ENCODE measurements at regions of chr10 and their contacts with region 1.

Region 1: DNA sequence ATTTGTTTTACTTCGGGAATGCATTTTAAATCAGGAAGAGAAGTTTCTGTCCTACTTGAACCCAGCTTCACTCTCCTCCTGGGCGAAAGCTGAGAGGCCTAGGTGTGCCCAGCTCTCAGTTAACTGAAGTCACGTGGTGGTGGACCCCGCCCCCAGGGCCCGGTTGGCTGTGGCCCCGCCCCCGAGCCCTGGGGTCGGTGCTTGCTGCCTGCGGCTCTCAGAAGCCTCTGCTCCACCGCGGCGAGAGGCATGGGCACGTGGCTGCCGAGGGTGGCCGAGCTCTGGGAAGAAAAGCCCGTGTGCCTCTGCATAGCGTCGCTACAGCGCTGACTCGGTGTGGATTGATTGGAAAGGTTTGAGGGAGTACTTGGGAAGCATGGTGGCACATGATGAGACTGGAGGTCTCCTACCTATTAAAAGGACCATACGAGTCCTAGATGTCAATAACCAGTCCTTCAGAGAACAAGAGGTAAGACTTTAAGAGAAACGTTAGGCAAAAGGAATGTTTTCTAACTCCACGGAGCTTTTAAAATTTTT is 34.1 kb downstream of the NET1 start:
- DNase-seq: peak; percentile 95 to 97 (median 97)
- ATAC-seq: peak; percentile 89 to 95 (median 94)
- H3K4me3 ChIP-seq: peak overlapping the region; percentile 57 to 64 (median 61)
- H3K27ac ChIP-seq: peak overlapping the region; percentile 68 to 82 (median 82)
- H3K4me1 ChIP-seq: peaks cover 0 to 15% (median 5%) of the 10 kb centered on the region in 4 donors
- H3K27me3 ChIP-seq: no peaks in the 10 kb centered on the region
- CTCF ChIP-seq: no peak
- POLR2A ChIP-seq: peak; percentile 98

Region 2: DNA sequence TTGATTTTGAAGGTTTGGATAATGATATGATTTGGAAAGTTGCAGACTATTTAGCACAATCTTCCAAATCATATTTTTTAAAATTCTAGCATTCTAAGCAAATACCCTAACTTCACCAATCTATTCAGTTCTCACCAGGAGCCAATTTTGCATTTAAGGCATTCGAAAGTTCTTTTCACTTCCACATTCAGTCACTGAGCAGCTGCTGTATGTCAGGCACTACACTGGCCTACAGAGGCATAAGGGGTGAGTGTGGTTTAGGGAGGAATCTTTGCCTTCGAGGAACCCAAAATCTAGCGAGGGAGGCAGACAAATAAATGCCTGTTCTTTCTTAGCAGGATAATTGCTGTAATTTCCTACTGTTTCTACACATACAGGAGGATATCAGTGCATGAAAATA is 92.4 kb before region 1 on chr10:
- intact Hi-C with region 1: no loop called
- DNase-seq: no peak
- ATAC-seq: no peak
- H3K4me3 ChIP-seq: no peak overlapping the region
- H3K27ac ChIP-seq: no peak overlapping the region
- H3K4me1 ChIP-seq: no peaks in the 10 kb centered on the region
- H3K27me3 ChIP-seq: no peaks in the 10 kb centered on the region
- CTCF ChIP-seq: no peak
- POLR2A ChIP-seq: no peak

Region 3: DNA sequence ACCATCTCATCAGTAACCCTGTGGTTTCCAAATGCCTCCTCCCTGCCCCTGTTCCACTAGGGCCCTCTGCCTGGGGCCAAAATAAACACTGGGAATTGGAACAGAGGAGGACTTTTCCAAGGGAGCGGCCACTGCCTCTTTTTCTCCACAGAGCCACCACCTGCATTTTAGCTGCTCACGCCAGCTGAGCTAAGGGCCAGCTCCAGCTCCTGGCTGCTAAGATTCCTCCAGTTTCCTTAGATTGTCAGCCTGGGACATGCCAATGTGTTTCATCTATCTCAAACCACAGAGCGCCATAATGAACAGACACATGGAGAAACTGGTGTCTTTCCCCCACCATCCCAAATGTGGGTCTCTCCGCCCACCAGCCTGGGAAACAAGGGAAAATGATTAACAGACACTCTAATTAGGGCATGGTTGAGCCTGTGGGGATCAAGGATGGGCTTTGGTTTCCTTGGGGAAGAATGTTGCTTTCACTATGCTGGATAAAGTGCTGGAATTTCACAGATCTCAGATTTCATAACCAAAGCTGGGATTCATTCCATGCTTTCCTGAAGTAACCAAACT is 167.8 kb after region 1 on chr10:
- intact Hi-C with region 1: loop called in 1 of 2 experiments (anchors 10 kb)
- DNase-seq: no peak
- ATAC-seq: peak; percentile 64 to 84 (median 82)
- H3K4me3 ChIP-seq: no peak overlapping the region
- H3K27ac ChIP-seq: peak overlapping the region in 2 of 3 donors; percentile 52 to 64
- H3K4me1 ChIP-seq: peaks cover 0 to 26% (median 7%) of the 10 kb centered on the region in 4 donors
- H3K27me3 ChIP-seq: no peaks in the 10 kb centered on the region
- CTCF ChIP-seq: no peak
- POLR2A ChIP-seq: no peak

Region 4: GRCh38 chr10:5623081-5623748 is 176.8 kb after region 1 on chr10:
- intact Hi-C with region 1: loop called (anchors 5 to 10 kb)
- DNase-seq: peak; percentile 93 to 96 (median 95)
- ATAC-seq: peak; percentile 82 to 90 (median 84)
- H3K4me3 ChIP-seq: no peak overlapping the region
- H3K27ac ChIP-seq: no peak overlapping the region
- H3K4me1 ChIP-seq: peaks cover 0 to 28% (median 13%) of the 10 kb centered on the region in 4 donors
- H3K27me3 ChIP-seq: no peaks in the 10 kb centered on the region
- CTCF ChIP-seq: peak; percentile 87 to 97 (median 95)
- POLR2A ChIP-seq: no peak

Region 5: DNA sequence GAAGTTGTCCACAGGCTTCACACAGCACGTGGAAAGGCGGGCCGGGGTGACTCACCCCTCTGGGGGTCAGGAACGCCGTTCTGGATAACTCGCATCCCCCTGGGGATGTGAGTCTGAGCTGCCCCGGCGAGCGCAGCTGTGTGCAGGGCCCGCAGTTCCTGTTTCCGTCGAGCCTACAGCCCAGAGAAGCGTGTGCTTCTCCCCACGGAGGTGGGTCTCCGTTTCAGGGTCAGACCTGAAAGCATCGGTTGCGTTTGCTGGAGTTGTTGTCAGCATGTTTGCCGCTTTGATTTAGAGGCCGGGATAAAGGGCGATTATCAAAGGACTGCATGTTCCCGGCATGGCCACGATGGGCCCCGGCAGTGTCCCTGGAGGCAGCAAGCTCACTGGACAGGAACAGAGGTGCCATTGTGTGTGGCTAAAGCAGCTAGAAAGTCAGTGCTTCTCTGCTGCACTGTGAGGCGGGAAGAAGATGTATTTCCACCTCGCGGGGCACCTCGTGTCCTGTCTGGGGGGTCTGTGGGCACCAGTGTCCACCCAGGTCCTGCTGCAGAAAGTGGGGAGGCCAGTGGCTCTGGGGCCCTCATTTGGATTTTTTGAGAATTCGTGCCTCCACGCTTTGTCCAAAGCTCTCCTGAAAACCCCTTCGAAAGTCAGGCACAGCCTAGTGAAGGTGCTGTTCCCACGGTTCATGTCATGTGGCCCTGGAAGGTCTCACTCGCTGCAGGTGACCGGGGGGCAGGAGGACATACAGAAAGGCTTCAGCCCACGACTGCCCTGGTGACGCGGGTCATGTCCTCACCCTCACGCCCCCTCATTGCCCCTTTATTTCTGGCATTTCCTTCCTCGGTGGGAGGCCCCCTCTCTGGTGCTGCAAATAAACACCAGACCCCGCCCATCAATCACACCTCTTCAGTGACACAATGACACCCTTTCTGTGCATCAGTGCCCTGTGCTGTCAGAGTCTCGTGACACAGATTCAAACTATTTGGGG is 394.2 kb after region 1 on chr10:
- intact Hi-C with region 1: no loop called
- DNase-seq: no peak
- ATAC-seq: peak; percentile 21 to 37 (median 36)
- H3K4me3 ChIP-seq: no peak overlapping the region
- H3K27ac ChIP-seq: no peak overlapping the region
- H3K4me1 ChIP-seq: no peaks in the 10 kb centered on the region
- H3K27me3 ChIP-seq: no peaks in the 10 kb centered on the region
- CTCF ChIP-seq: no peak
- POLR2A ChIP-seq: no peak